CD14-positive monocyte (primary cell): ENCODE measurements at regions of chr1 and their contacts with region 1.

Region 1: GRCh38 chr1:171485375-171486047 is at the start of gene PRRC2C:
- DNase-seq: peak; percentile 96 to 98 (median 97)
- H3K4me3 ChIP-seq: peak within 1 kb of the TSS; percentile 80 to 95 (median 93)
- H3K4me3 Mint-ChIP-seq: peak within 1 kb of the TSS; percentile 93 to 99
- H3K27ac ChIP-seq: peak within 1 kb of the TSS; percentile 99
- H3K27ac Mint-ChIP-seq: peak within 1 kb of the TSS; percentile 98 to 100 (median 99)
- H3K4me1 ChIP-seq: peaks cover 16 to 29% of the 10 kb centered on the region in 2 donors
- H3K4me1 Mint-ChIP-seq: peaks cover 34% of the 10 kb centered on the region
- H3K27me3 ChIP-seq: no peaks in the 10 kb centered on the region
- H3K27me3 Mint-ChIP-seq: no peaks in the 10 kb centered on the region
- CTCF ChIP-seq: peak; percentile 80
- polyA plus RNA-seq, gene PRRC2C: 13.8 to 69.1 (median 15.6) TPM

Region 2: GRCh38 chr1:171152549-171152948 is 333.0 kb before region 1 on chr1:
- intact Hi-C with region 1: no loop called
- DNase-seq: no peak
- H3K4me3 ChIP-seq: no peak overlapping the region
- H3K4me3 Mint-ChIP-seq: no peak overlapping the region
- H3K27ac ChIP-seq: no peak overlapping the region
- H3K27ac Mint-ChIP-seq: no peak overlapping the region
- H3K4me1 ChIP-seq: no peaks in the 10 kb centered on the region
- H3K4me1 Mint-ChIP-seq: no peaks in the 10 kb centered on the region
- H3K27me3 ChIP-seq: no peaks in the 10 kb centered on the region
- H3K27me3 Mint-ChIP-seq: peaks cover 0 to 3% (median 1%) of the 10 kb centered on the region in 3 donors
- CTCF ChIP-seq: no peak

Region 3: DNA sequence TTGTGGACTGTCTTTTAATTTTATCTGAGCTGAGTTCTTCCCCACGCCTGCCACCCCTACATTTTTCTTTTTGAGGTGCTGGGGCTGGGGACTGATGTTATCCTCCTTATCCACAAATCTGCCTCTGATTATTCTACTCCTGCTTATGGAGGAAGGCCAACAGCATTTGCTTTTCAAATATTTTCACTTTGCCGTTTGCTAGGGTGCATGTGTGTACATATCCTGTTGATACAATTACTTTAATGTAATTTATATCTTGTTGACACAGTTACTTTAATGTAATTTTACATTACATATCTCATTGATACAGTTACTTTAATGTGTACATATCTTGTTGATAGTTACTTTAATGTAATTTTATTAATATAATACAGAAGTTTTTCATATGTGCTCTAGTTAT is 36.1 kb after region 1 on chr1:
- intact Hi-C with region 1: loop called in 1 of 2 experiments (anchors 5 kb)
- DNase-seq: no peak
- H3K4me3 ChIP-seq: no peak overlapping the region
- H3K4me3 Mint-ChIP-seq: no peak overlapping the region
- H3K27ac ChIP-seq: no peak overlapping the region
- H3K27ac Mint-ChIP-seq: peak overlapping the region in 1 of 7 donors; percentile 76
- H3K4me1 ChIP-seq: no peaks in the 10 kb centered on the region
- H3K4me1 Mint-ChIP-seq: no peaks in the 10 kb centered on the region
- H3K27me3 ChIP-seq: no peaks in the 10 kb centered on the region
- H3K27me3 Mint-ChIP-seq: no peaks in the 10 kb centered on the region
- CTCF ChIP-seq: no peak

Region 4: GRCh38 chr1:171741872-171742576 is 256.5 kb after region 1 on chr1 and contains the start of gene VAMP4:
- intact Hi-C with region 1: loop called in 1 of 2 experiments (anchors 5 kb)
- DNase-seq: peak; percentile 70 to 79 (median 78)
- H3K4me3 ChIP-seq: peak within 1 kb of the TSS; percentile 93 to 99 (median 96)
- H3K4me3 Mint-ChIP-seq: peak within 1 kb of the TSS; percentile 98 to 99
- H3K27ac ChIP-seq: peak within 1 kb of the TSS; percentile 96
- H3K27ac Mint-ChIP-seq: peak within 1 kb of the TSS; percentile 98 to 100 (median 99)
- H3K4me1 ChIP-seq: peaks cover 57 to 69% of the 10 kb centered on the region in 2 donors
- H3K4me1 Mint-ChIP-seq: peaks cover 59% of the 10 kb centered on the region
- H3K27me3 ChIP-seq: no peaks in the 10 kb centered on the region
- H3K27me3 Mint-ChIP-seq: peaks cover 0 to 2% (median 0%) of the 10 kb centered on the region in 3 donors
- CTCF ChIP-seq: no peak
- polyA plus RNA-seq, gene VAMP4: 13.3 to 19.5 (median 18.8) TPM